ENCODE measurements at regions of chr22 and their contacts with region 1.

Region 1: GRCh38 chr22:28442264-28442710 is 237.4 kb downstream of the TTC28 start:
- H3K4me3 Mint-ChIP-seq: peak overlapping the region; percentile 81
- H3K27ac Mint-ChIP-seq: peak overlapping the region; percentile 57
- H3K4me1 Mint-ChIP-seq: peaks cover 24% of the 10 kb centered on the region
- H3K27me3 Mint-ChIP-seq: peaks cover 13% of the 10 kb centered on the region

Region 2: DNA sequence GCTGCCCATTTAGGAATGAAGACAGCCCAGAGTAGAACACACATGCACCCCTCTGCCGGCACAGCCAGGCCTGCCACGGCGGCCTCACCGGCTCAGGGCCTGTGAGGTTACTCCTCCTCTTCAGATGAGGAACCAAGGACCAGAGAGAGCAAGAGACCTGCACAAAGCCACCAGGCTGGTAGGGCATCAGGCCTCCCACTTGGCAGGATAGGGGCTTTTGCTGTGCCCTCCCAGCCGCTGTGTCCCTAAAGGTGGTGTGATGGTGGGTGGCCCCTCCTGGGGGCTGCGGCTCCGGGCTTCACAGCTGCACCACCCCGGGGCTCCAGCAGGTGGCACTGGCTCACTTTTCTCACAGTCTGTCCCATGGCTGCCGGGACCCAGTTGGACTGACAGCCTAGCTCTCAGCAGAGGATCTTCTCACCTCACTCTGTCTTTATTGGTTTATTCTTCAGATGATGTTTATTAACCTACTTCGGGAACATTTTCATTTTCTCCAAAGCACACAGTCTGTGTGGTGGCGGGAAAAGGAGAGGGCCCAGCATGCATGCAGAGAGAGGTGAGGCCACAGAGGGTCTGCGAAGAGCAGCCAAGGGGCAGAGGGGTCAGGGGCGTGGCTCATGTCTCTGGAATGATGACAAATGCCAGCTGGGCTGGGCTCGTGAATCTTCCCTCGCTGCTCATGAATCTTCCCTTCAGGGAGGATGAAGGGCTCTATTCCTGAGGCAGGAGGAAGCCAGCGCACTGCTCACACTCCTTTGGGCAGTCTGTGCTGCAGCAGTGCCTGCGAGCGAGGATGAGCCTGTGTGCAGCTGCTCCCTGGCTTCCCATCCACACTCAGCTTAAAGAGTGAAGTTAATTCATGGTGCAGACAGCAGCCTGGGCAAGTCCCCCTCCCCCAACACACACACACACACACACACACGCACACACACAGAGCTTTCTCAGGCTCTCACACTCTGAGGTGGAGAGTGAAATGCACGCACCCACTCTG is 422.1 kb before region 1 on chr22:
- intact Hi-C with region 1: loop called (anchors 10 kb)
- H3K4me3 Mint-ChIP-seq: no peak overlapping the region
- H3K27ac Mint-ChIP-seq: no peak overlapping the region
- H3K4me1 Mint-ChIP-seq: no peaks in the 10 kb centered on the region
- H3K27me3 Mint-ChIP-seq: no peaks in the 10 kb centered on the region

Region 3: GRCh38 chr22:28051787-28052356 is 390.4 kb before region 1 on chr22:
- intact Hi-C with region 1: loop called (anchors 2 kb)
- H3K4me3 Mint-ChIP-seq: no peak overlapping the region
- H3K27ac Mint-ChIP-seq: no peak overlapping the region
- H3K4me1 Mint-ChIP-seq: no peaks in the 10 kb centered on the region
- H3K27me3 Mint-ChIP-seq: no peaks in the 10 kb centered on the region

Region 4: GRCh38 chr22:28297504-28297903 is 144.8 kb before region 1 on chr22:
- intact Hi-C with region 1: loop called (anchors 10 kb)
- H3K4me3 Mint-ChIP-seq: no peak overlapping the region
- H3K27ac Mint-ChIP-seq: no peak overlapping the region
- H3K4me1 Mint-ChIP-seq: peaks cover 17% of the 10 kb centered on the region
- H3K27me3 Mint-ChIP-seq: no peaks in the 10 kb centered on the region

Measured in dendritic cell treated with granulocyte-macrophage colony-stimulating factor and Interleukin-4, amounts not matched to agents 40 ng/mL and 50 ng/mL, for 4 days (primary cell).